HAP-1 (cell line): ENCODE measurements at regions of chr11 and their contacts with region 1.

Region 1: GRCh38 chr11:125154378-125155099 is 10.0 kb upstream of the PKNOX2 start:
- DNase-seq: no peak
- H3K4me3 ChIP-seq: no peak overlapping the region
- H3K4me1 ChIP-seq: peaks cover 9% of the 10 kb centered on the region
- H3K27me3 ChIP-seq: no peaks in the 10 kb centered on the region

Region 2: DNA sequence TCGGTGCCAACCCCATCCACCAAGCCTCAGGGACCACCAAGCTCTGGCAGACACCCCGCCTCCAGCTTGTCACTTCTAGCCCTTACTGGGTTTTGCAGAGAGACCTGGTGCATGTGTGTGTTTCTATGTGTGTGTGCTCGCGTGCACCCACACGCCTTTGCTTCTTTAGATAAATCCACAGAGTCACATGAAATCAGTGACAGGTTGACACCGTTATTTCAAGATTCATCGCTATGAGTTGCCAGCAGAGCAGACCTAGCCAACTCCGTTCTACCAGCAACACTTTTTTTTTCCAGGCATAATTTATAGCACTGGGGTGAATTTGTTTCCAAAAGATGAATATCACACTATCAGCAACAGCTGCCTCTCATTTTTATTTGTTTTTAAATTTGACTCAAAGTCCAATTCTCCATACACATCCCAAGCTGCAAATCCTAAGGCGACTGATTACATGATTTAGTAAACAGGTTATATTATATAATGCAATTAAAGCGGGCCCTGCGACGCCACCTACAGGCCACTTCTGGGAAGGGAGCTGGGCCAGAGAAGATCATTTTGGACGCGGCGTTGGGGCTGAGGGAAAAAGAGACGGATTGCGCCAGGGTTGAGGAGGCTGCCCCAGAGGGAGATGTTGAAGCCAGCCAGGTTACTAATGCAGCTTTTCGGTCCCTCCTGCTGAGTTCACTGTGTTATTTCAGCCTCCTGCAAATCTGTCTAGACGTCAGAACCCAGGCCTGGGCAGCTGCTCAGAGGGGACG is 191.1 kb after region 1 on chr11:
- in situ Hi-C with region 1: loop called (anchors 5 kb)
- DNase-seq: peak; percentile 27 to 80
- H3K4me3 ChIP-seq: no peak overlapping the region
- H3K4me1 ChIP-seq: peaks cover 4% of the 10 kb centered on the region; the same call in 1 of the 2 replicates
- H3K27me3 ChIP-seq: no peaks in the 10 kb centered on the region

Region 3: GRCh38 chr11:125364121-125364826 is 209.7 kb after region 1 on chr11:
- in situ Hi-C with region 1: no loop called
- DNase-seq: no peak
- H3K4me3 ChIP-seq: no peak overlapping the region
- H3K4me1 ChIP-seq: no peaks in the 10 kb centered on the region
- H3K27me3 ChIP-seq: no peaks in the 10 kb centered on the region